Mammary epithelial cell (primary cell): ENCODE measurements at regions of chr10 and their contacts with region 1.

Region 1: GRCh38 chr10:75235375-75236177 is at the start of gene COMTD1:
- DNase-seq: peak; percentile 89
- H3K4me3 ChIP-seq: peak within 1 kb of the TSS; percentile 67 to 81 (median 81)
- H3K27ac ChIP-seq: peak within 1 kb of the TSS; percentile 60
- H3K4me1 ChIP-seq: peaks cover 26% of the 10 kb centered on the region
- H3K27me3 ChIP-seq: no peaks in the 10 kb centered on the region
- CTCF ChIP-seq: peak; percentile 100
- total RNA-seq, gene COMTD1: 20.0 to 26.3 TPM

Region 2: GRCh38 chr10:74262856-74263255 is 972.7 kb before region 1 on chr10:
- CTCF ChIA-PET with region 1: no interaction called
- dilution Hi-C with region 1: no loop called
- in situ Hi-C with region 1: no loop called
- intact Hi-C with region 1: loop called (anchors 5 kb)
- DNase-seq: no peak
- H3K4me3 ChIP-seq: no peak overlapping the region
- H3K27ac ChIP-seq: no peak overlapping the region
- H3K4me1 ChIP-seq: no peaks in the 10 kb centered on the region
- H3K27me3 ChIP-seq: no peaks in the 10 kb centered on the region
- CTCF ChIP-seq: no peak

Region 3: DNA sequence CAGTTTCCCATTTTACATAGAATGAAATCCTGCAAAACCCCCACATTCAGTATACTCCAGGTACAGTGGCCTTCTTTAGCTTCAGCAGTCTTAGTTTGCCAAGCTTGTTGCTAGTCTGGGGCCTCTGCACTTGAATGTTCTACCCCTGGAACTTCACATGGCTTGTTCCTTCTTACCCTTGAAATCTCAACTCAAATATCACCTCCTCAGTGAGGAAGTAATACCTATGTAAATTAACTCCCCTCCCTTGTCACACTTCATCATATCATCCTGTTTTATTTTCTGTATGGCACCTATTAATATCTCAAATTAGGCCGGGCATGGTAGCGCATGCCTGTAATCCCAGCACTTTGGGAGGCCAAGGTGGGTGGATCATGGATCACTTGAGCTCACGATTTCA is 572.9 kb before region 1 on chr10:
- CTCF ChIA-PET with region 1: no interaction called
- dilution Hi-C with region 1: no loop called
- in situ Hi-C with region 1: no loop called
- intact Hi-C with region 1: no loop called
- DNase-seq: no peak
- H3K4me3 ChIP-seq: no peak overlapping the region
- H3K27ac ChIP-seq: no peak overlapping the region
- H3K4me1 ChIP-seq: no peaks in the 10 kb centered on the region
- H3K27me3 ChIP-seq: no peaks in the 10 kb centered on the region
- CTCF ChIP-seq: no peak

Region 4: GRCh38 chr10:75019370-75019769 is 216.2 kb before region 1 on chr10:
- CTCF ChIA-PET with region 1: no interaction called
- dilution Hi-C with region 1: no loop called
- in situ Hi-C with region 1: no loop called
- intact Hi-C with region 1: loop called (anchors 5 kb)
- DNase-seq: peak; percentile 7
- H3K4me3 ChIP-seq: no peak overlapping the region
- H3K27ac ChIP-seq: no peak overlapping the region
- H3K4me1 ChIP-seq: no peaks in the 10 kb centered on the region
- H3K27me3 ChIP-seq: no peaks in the 10 kb centered on the region
- CTCF ChIP-seq: peak; percentile 5 to 42

Region 5: GRCh38 chr10:75143353-75143752 is 92.2 kb before region 1 on chr10:
- CTCF ChIA-PET with region 1: interaction called, 10 read pairs
- dilution Hi-C with region 1: no loop called
- in situ Hi-C with region 1: no loop called
- intact Hi-C with region 1: no loop called
- DNase-seq: peak; percentile 46
- H3K4me3 ChIP-seq: peak overlapping the region in 1 of 3 experiments; percentile 13
- H3K27ac ChIP-seq: peak overlapping the region; percentile 46
- H3K4me1 ChIP-seq: peaks cover 41% of the 10 kb centered on the region
- H3K27me3 ChIP-seq: no peaks in the 10 kb centered on the region
- CTCF ChIP-seq: no peak

Region 6: DNA sequence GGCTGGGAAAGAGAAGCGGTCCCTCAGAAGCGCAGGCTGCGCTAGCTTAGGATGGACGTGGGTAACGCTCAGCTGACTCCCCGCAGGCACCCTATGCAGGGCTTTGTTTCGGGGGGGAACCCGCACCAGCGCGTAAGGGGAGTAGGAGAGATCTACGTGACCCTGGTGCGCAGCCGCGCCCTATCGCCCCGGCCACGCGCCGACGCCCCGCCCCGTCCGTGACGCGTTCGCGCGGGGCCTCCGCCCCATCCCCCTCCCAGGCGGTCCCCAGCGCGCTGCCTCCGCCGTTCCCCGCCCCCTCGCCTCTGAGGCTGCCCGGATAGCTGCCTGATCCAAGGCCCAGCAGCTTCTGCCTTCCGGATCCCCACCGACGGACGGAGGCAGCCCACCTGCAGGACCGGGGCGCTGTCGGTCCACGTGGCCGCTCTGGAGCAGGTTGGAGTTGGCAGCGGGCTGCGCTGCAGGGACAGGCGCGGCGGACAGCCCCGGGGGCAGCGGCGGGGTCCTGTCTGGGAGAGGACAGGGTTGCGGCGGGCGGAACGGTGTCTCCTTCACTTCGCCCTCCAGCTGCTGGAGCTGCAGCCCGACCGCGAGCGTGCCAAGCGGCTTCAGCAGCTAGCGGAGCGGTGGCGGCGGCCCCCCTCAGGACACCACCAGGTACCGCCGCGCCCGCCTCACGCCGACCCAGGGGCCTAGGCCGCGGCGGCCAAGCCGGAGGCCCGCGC is 25.1 kb before region 1 on chr10 and contains the start of gene VDAC2:
- CTCF ChIA-PET with region 1: interaction called, 12 read pairs
- dilution Hi-C with region 1: no loop called
- in situ Hi-C with region 1: no loop called
- intact Hi-C with region 1: loop called (anchors 1 kb)
- DNase-seq: peak; percentile 89
- H3K4me3 ChIP-seq: peak within 1 kb of the TSS; percentile 61 to 98 (median 95)
- H3K27ac ChIP-seq: peak within 1 kb of the TSS; percentile 93
- H3K4me1 ChIP-seq: peaks cover 54% of the 10 kb centered on the region
- H3K27me3 ChIP-seq: no peaks in the 10 kb centered on the region
- CTCF ChIP-seq: no peak
- total RNA-seq, gene VDAC2: 230 to 262 TPM